ENCODE measurements at regions of chr12 and their contacts with region 1.

Region 1: GRCh38 chr12:54439521-54440255 is 20.6 kb upstream of the ITGA5 start:
- DNase-seq: peak; percentile 72
- CTCF ChIP-seq: peak; percentile 47

Region 2: GRCh38 chr12:54398995-54399793 is 40.5 kb before region 1 on chr12:
- in situ Hi-C with region 1: loop called (anchors 5 kb)
- DNase-seq: peak; percentile 86
- CTCF ChIP-seq: peak; percentile 100